ENCODE measurements at regions of chr5 and their contacts with region 1.

Region 1: DNA sequence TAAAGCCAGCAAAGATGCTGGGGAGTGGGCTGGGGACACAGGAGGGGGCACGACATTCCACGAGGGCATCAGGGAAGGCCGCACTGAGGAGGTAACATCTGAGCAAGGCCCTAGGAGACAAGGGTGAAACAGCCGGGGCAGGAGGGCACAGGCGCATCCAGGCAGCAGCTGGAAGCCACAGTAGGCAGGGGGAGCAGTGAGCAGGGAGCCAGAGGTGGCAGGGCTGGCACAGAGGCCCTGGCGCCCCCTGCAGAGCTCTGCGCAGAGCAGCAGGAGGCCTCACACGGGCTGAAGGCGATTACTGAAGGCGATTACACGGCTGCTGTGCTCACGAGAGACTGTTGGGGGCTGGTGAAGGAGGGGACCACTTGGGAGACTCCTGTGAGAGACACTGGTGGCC is 15.4 kb downstream of the LMAN2 start:
- DNase-seq: no peak
- H3K4me3 ChIP-seq: no peak overlapping the region
- H3K27ac ChIP-seq: no peak overlapping the region
- H3K4me1 ChIP-seq: peaks cover 13% of the 10 kb centered on the region
- H3K27me3 ChIP-seq: no peaks in the 10 kb centered on the region
- CTCF ChIP-seq: peak; percentile 36 to 44

Region 2: GRCh38 chr5:177317959-177318377 is 18.1 kb before region 1 on chr5:
- CTCF ChIA-PET with region 1: no interaction called
- dilution Hi-C with region 1: no loop called
- in situ Hi-C with region 1: no loop called
- intact Hi-C with region 1: loop called (anchors 2 kb)
- DNase-seq: peak; percentile 61
- H3K4me3 ChIP-seq: no peak overlapping the region
- H3K27ac ChIP-seq: no peak overlapping the region
- H3K4me1 ChIP-seq: peaks cover 2% of the 10 kb centered on the region
- H3K27me3 ChIP-seq: no peaks in the 10 kb centered on the region
- CTCF ChIP-seq: peak; percentile 88

Measured in mammary epithelial cell (primary cell).